Gastrocnemius medialis (tissue), 4 donors: ENCODE measurements at regions of chr7 and their contacts with region 1.

Region 1: DNA sequence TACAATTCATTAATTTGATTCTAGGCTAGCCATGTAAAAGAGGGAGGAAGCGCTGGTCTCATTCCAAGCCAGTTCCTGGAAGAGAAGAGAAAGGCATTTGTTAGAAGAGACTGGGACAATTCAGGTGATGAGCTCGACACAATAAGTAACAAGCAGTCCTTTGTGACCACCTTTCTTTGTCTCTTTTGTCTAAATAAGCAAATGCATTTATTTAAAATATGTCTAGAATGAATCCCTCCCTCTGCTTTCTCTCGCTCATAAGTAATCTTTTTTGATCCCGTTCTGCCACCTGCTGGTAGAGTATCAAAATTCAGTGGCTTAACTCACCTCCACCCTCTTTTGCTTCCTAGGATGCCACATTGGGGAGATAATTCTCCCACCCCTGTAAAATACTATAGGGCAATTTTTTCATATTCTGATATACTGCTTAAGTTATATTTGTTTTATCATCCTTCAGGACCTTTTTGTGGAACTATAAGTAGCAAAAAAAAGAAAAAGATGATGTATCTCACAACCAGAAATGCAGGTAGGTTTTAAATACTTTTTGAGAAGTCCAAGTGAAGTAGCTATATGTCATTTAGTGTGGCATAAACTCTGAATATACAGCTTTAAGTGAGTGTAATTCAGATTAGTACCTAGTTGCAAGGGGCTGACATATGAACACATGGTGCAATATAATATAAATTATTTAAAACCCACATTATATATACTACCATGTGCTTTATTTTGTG is 91.5 kb downstream of the GSDME start:
- DNase-seq: peak in 1 of 2 donors; percentile 5
- ATAC-seq: peak in 1 of 2 donors; percentile 76
- H3K4me3 ChIP-seq: no peak overlapping the region
- H3K27ac ChIP-seq: no peak overlapping the region
- H3K4me1 ChIP-seq: peaks cover 5% of the 10 kb centered on the region in 2 donors
- H3K27me3 ChIP-seq: no peaks in the 10 kb centered on the region
- CTCF ChIP-seq: peak; percentile 35 to 65 (median 59)
- POLR2A ChIP-seq: no peak

Region 2: GRCh38 chr7:23570592-23571200 is 1095.0 kb before region 1 on chr7:
- in situ Hi-C with region 1: loop called in 3 of 4 experiments (anchors 25 kb)
- intact Hi-C with region 1: no loop called
- DNase-seq: peak; percentile 40 to 56
- ATAC-seq: peak; percentile 83 to 87
- H3K4me3 ChIP-seq: no peak overlapping the region
- H3K27ac ChIP-seq: no peak overlapping the region
- H3K4me1 ChIP-seq: no peaks in the 10 kb centered on the region
- H3K27me3 ChIP-seq: no peaks in the 10 kb centered on the region
- CTCF ChIP-seq: peak; percentile 73 to 87 (median 77)
- POLR2A ChIP-seq: no peak

Region 3: DNA sequence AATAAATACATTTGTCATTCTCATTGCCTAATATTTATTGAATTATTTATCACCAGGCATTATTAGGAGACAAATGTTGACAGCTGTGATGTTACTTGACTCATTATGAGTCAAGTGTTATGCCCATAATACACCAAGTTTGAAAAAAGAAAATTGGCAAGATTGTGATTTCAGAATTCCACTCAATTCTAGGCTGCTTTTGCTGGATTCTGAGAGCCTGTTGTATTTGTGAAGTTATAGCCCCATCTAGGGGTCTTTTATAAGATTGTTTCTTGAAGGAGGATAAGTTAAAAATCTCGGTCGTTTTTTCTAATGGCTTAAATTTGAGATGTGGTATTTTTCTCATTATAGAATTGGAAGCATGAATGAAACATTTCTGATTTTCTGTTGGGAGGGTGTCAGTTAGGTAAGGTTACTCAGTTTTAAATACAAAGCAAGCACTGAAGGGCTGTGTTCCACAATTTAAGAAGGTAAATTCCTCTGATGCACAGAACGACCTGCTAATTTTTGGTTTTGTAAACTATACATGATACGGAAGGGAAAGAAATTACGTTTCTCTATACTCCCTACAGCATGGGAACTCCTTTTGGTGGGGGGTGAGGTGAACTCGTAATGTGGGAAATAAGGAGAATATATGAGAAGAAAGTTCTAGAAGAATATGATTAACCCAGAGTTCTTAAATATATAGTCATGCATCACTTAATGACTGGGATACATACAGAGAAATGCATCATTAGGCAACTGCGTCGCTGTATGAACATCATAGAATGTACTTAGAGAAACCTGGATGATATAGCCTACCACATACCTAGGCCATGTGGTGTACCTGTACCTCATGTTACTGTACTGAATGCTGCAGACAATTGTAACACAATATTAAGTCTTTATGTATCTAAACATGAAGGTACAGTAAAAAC is 953.1 kb before region 1 on chr7:
- in situ Hi-C with region 1: loop called in 1 of 4 experiments (anchors 25 kb)
- intact Hi-C with region 1: no loop called
- DNase-seq: no peak
- ATAC-seq: peak; percentile 65 to 68
- H3K4me3 ChIP-seq: no peak overlapping the region
- H3K27ac ChIP-seq: no peak overlapping the region
- H3K4me1 ChIP-seq: no peaks in the 10 kb centered on the region
- H3K27me3 ChIP-seq: no peaks in the 10 kb centered on the region
- CTCF ChIP-seq: peak; percentile 53 to 70 (median 68)
- POLR2A ChIP-seq: no peak

Region 4: DNA sequence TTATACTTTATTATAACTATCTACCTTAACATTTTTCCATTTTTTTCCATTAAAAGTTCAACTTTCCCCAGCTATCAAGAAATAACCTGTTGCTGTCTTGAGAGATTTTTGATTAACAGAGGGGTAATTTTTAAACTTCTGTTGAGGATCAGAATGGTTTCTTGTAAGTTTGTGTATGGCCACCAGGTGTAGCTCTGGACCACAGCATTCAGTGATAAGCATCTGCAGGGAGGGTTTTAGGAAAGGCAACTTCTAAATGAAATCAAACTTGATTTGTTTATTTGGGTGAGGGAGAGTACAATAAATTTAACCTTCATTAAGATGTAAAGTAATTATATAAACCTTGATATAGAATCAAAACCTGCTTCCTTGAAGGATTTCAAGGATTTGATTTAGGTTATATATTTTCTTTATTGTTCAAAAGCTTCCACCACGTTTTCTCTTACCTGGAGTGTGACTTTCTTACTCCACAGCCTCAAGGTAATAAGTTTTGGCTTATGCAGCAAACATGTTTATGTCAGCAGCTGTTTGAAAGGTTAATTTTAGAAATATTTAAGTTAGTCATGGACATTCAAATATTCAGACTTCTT is 802.4 kb before region 1 on chr7:
- in situ Hi-C with region 1: loop called in 2 of 4 experiments (anchors 25 kb)
- intact Hi-C with region 1: no loop called
- DNase-seq: no peak
- ATAC-seq: no peak
- H3K4me3 ChIP-seq: no peak overlapping the region
- H3K27ac ChIP-seq: no peak overlapping the region
- H3K4me1 ChIP-seq: no peaks in the 10 kb centered on the region
- H3K27me3 ChIP-seq: no peaks in the 10 kb centered on the region
- CTCF ChIP-seq: peak in 1 of 5 experiments; percentile 31
- POLR2A ChIP-seq: no peak

Region 5: GRCh38 chr7:24290004-24290641 is 375.6 kb before region 1 on chr7:
- in situ Hi-C with region 1: loop called in 2 of 4 experiments (anchors 10 to 25 kb)
- intact Hi-C with region 1: loop called (anchors 2 kb)
- DNase-seq: no peak
- ATAC-seq: peak in 1 of 2 donors; percentile 70
- H3K4me3 ChIP-seq: no peak overlapping the region
- H3K27ac ChIP-seq: no peak overlapping the region
- H3K4me1 ChIP-seq: no peaks in the 10 kb centered on the region
- H3K27me3 ChIP-seq: peaks cover 11 to 16% (median 14%) of the 10 kb centered on the region in 3 donors
- CTCF ChIP-seq: peak in 1 of 5 experiments; percentile 30
- POLR2A ChIP-seq: no peak

Region 6: GRCh38 chr7:24401628-24402593 is 263.8 kb before region 1 on chr7:
- in situ Hi-C with region 1: loop called in 3 of 4 experiments (anchors 10 to 25 kb)
- intact Hi-C with region 1: loop called (anchors 2 kb)
- DNase-seq: no peak
- ATAC-seq: peak; percentile 58 to 70
- H3K4me3 ChIP-seq: peak overlapping the region in 3 of 4 donors; percentile 17 to 39 (median 27)
- H3K27ac ChIP-seq: no peak overlapping the region
- H3K4me1 ChIP-seq: no peaks in the 10 kb centered on the region
- H3K27me3 ChIP-seq: no peaks in the 10 kb centered on the region
- CTCF ChIP-seq: peak in 3 of 5 experiments; percentile 27 to 41 (median 41)
- POLR2A ChIP-seq: no peak

Region 7: DNA sequence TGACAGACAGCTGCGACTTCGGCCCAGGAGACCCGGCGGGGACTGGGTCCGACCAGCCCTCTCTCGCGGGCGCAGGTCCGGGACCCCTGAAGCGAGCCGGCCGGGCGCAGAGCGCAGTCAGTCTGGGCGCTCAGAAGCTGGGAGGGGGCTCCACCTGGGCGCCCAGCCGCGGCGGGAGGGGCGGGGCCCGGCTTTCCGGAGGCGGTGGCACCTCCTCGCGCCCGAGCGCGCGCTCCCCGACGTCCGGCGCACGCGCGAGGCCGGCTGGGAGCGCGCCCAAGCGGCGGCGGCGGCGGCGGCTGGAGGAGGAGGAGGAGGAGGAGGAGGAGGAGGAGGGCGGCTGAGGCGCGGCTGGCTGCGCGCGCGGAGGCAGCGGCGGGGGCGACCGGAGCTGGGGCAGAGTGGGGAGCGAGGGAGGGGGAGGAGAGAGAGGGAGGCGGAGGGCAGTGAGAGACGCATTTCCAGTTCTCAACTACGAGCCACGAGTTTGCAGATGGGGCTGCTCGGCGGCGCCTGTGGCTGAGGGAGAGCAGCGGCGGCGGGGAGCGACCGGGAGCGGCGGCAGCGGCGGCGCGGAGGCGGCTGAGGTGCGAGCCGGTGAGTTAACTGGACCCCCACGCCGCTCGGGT is 92.6 kb before region 1 on chr7 and contains the start of gene PALS2:
- in situ Hi-C with region 1: loop called in 1 of 4 experiments (anchors 10 kb)
- intact Hi-C with region 1: loop called (anchors 5 kb)
- DNase-seq: peak; percentile 63 to 66
- ATAC-seq: peak; percentile 81 to 85
- H3K4me3 ChIP-seq: peak within 1 kb of the TSS; percentile 70 to 96 (median 84)
- H3K27ac ChIP-seq: peak within 1 kb of the TSS; percentile 95 to 97 (median 96)
- H3K4me1 ChIP-seq: peaks cover 19 to 33% of the 10 kb centered on the region in 2 donors
- H3K27me3 ChIP-seq: no peaks in the 10 kb centered on the region
- CTCF ChIP-seq: no peak
- POLR2A ChIP-seq: peak; percentile 73 to 75
- total RNA-seq, gene PALS2: 11.2 to 17.3 (median 12.4) TPM

Region 8: DNA sequence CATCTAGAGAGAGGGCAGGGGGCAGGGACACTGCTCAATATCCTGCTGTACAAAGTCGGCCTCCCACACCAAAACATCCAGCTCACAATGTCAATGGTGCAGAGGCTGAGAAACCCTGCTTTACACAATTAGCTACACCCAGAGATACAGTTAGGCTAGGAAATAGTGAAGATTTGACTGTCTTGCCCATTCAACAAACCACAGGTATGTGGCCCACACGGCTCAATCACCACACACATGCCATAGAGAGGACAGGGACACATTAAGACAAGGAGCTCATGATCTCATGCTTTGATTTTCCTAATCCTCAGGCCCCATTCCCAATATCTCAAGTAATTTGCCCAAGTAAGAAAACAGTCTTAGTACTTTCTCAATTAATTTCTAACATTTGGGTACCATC is 203.8 kb after region 1 on chr7:
- in situ Hi-C with region 1: no loop called
- intact Hi-C with region 1: no loop called
- DNase-seq: no peak
- ATAC-seq: no peak
- H3K4me3 ChIP-seq: no peak overlapping the region
- H3K27ac ChIP-seq: no peak overlapping the region
- H3K4me1 ChIP-seq: no peaks in the 10 kb centered on the region
- H3K27me3 ChIP-seq: no peaks in the 10 kb centered on the region
- CTCF ChIP-seq: no peak
- POLR2A ChIP-seq: no peak